B cell (primary cell): ENCODE measurements at regions of chr15 and their contacts with region 1.

Region 1: GRCh38 chr15:56491110-56491722 is 26.3 kb upstream of the MNS1 start:
- DNase-seq: peak; percentile 75
- ATAC-seq: peak; percentile 81
- H3K4me3 ChIP-seq: no peak overlapping the region
- H3K4me3 Mint-ChIP-seq: no peak overlapping the region
- H3K27ac ChIP-seq: no peak overlapping the region
- H3K27ac Mint-ChIP-seq: no peak overlapping the region
- H3K4me1 ChIP-seq: no peaks in the 10 kb centered on the region
- H3K4me1 Mint-ChIP-seq: no peaks in the 10 kb centered on the region
- H3K27me3 ChIP-seq: no peaks in the 10 kb centered on the region
- H3K27me3 Mint-ChIP-seq: no peaks in the 10 kb centered on the region
- CTCF ChIP-seq: peak; percentile 90

Region 2: GRCh38 chr15:56383010-56383409 is 108.2 kb before region 1 on chr15:
- CTCF ChIA-PET with region 1: no interaction called
- POLR2A ChIA-PET with region 1: no interaction called
- intact Hi-C with region 1: no loop called
- DNase-seq: no peak
- ATAC-seq: no peak
- H3K4me3 ChIP-seq: no peak overlapping the region
- H3K4me3 Mint-ChIP-seq: no peak overlapping the region
- H3K27ac ChIP-seq: no peak overlapping the region
- H3K27ac Mint-ChIP-seq: no peak overlapping the region
- H3K4me1 ChIP-seq: no peaks in the 10 kb centered on the region
- H3K4me1 Mint-ChIP-seq: no peaks in the 10 kb centered on the region
- H3K27me3 ChIP-seq: no peaks in the 10 kb centered on the region
- H3K27me3 Mint-ChIP-seq: no peaks in the 10 kb centered on the region
- CTCF ChIP-seq: no peak

Region 3: DNA sequence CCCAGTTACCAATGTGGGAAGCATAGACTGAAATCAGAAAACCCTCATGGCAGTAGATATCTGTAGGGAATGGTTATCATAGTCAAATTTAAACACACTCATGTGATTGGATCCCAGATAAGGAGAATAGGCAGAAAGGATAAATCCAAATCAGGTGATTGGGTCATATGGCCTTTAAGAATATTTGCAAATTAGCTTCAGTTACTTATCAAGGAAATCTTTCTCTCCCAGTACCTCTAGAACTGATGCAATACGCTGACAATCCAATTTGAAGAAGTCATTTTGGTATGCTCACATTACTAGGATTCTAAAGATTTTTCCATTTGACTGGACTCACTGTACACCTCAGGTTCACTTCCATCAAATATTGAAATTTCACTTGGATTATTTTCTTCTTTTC is 61.5 kb after region 1 on chr15:
- CTCF ChIA-PET with region 1: no interaction called
- POLR2A ChIA-PET with region 1: no interaction called
- intact Hi-C with region 1: no loop called
- DNase-seq: no peak
- ATAC-seq: no peak
- H3K4me3 ChIP-seq: no peak overlapping the region
- H3K4me3 Mint-ChIP-seq: no peak overlapping the region
- H3K27ac ChIP-seq: no peak overlapping the region
- H3K27ac Mint-ChIP-seq: no peak overlapping the region
- H3K4me1 ChIP-seq: no peaks in the 10 kb centered on the region
- H3K4me1 Mint-ChIP-seq: no peaks in the 10 kb centered on the region
- H3K27me3 ChIP-seq: no peaks in the 10 kb centered on the region
- H3K27me3 Mint-ChIP-seq: peaks cover 4% of the 10 kb centered on the region
- CTCF ChIP-seq: no peak

Region 4: GRCh38 chr15:56653787-56654186 is 162.6 kb after region 1 on chr15:
- CTCF ChIA-PET with region 1: no interaction called
- POLR2A ChIA-PET with region 1: no interaction called
- intact Hi-C with region 1: no loop called
- DNase-seq: no peak
- ATAC-seq: no peak
- H3K4me3 ChIP-seq: no peak overlapping the region
- H3K4me3 Mint-ChIP-seq: no peak overlapping the region
- H3K27ac ChIP-seq: no peak overlapping the region
- H3K27ac Mint-ChIP-seq: no peak overlapping the region
- H3K4me1 ChIP-seq: no peaks in the 10 kb centered on the region
- H3K4me1 Mint-ChIP-seq: no peaks in the 10 kb centered on the region
- H3K27me3 ChIP-seq: no peaks in the 10 kb centered on the region
- H3K27me3 Mint-ChIP-seq: no peaks in the 10 kb centered on the region
- CTCF ChIP-seq: no peak

Region 5: DNA sequence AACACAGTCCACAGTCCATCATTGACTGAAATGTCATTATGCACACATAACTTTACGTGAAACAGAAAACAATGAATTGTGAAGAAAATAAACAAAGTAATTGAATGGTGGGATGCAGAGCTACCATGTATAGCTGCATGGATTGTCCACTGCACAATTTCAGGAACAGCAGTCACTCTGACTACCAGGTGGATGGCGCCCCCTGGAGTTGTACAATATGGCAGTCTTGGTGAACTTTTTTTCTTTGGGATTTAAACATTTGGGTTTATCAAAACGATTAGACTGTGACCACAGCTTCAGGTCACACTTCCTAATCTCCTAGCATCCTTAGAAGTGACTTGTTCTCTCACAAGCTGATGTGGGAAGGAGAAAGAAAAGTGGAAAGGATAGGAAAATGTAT is 378.4 kb after region 1 on chr15:
- CTCF ChIA-PET with region 1: interaction called, 37 read pairs
- POLR2A ChIA-PET with region 1: no interaction called
- intact Hi-C with region 1: loop called (anchors 1 kb)
- DNase-seq: peak; percentile 38
- ATAC-seq: no peak
- H3K4me3 ChIP-seq: no peak overlapping the region
- H3K4me3 Mint-ChIP-seq: no peak overlapping the region
- H3K27ac ChIP-seq: no peak overlapping the region
- H3K27ac Mint-ChIP-seq: no peak overlapping the region
- H3K4me1 ChIP-seq: no peaks in the 10 kb centered on the region
- H3K4me1 Mint-ChIP-seq: peaks cover 6% of the 10 kb centered on the region
- H3K27me3 ChIP-seq: no peaks in the 10 kb centered on the region
- H3K27me3 Mint-ChIP-seq: no peaks in the 10 kb centered on the region
- CTCF ChIP-seq: peak; percentile 40

Region 6: DNA sequence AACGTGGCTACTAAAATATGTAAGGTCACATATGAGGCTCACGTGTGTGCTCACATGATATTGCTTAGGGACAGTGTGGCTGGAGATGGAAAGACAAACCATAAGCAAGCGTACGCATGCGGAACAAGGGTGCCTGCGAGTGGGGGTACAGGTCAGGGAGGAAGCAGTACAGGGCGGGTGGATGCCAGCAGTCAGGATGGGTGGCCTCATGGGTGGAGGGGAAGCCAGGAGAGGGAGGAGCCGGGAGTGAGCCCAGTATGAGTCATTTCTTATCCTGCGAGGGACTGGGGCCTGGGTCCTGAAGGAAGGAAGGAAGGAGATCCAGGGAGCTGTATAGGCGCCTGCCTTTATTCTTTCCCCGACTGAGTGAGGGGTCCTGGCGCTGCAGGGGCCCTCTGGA is 843.0 kb after region 1 on chr15:
- CTCF ChIA-PET with region 1: no interaction called
- POLR2A ChIA-PET with region 1: no interaction called
- intact Hi-C with region 1: no loop called
- DNase-seq: no peak
- ATAC-seq: no peak
- H3K4me3 ChIP-seq: no peak overlapping the region
- H3K4me3 Mint-ChIP-seq: no peak overlapping the region
- H3K27ac ChIP-seq: no peak overlapping the region
- H3K27ac Mint-ChIP-seq: no peak overlapping the region
- H3K4me1 ChIP-seq: peaks cover 0 to 4% of the 10 kb centered on the region in 2 donors
- H3K4me1 Mint-ChIP-seq: peaks cover 4% of the 10 kb centered on the region
- H3K27me3 ChIP-seq: no peaks in the 10 kb centered on the region
- H3K27me3 Mint-ChIP-seq: peaks cover 27% of the 10 kb centered on the region
- CTCF ChIP-seq: no peak